OCI-LY7 (cell line): ENCODE measurements at regions of chr16 and their contacts with region 1.

Region 1: DNA sequence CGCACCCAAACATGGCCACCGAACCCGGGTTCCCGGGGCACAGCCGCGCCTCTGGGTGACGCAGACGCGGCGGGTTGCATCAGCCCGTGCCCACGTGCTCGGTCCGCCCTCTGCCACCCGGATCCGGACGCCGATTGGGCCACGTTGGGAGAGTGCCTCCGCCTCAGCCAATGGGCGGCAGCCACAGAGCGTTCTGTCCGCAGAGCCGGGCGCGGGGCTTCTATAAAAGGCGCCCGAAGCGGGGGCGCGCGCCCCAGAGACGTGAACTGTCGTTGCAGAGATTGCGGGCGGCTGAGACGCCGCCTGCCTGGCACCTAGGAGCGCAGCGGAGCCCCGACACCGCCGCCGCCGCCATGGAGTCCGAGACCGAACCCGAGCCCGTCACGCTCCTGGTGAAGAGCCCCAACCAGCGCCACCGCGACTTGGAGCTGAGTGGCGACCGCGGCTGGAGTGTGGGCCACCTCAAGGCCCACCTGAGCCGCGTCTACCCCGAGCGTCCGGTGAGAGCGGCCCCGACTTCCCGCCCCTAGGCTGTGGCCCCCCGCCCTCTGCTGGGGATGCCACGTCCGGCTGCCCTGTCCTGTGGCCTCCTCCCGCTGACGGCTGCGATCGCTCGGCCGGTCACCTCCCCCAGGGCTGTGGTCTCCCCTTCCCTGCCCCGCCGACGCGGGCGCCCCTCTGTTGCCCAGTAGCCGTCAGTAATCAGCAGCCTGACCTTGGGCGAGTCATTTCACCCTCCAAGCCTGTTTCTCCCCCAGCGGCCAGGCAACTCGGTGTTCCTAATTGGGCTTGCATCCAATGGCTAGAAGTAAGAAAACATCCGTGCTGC is at the start of gene HERPUD1:
- DNase-seq: peak; percentile 99
- H3K4me3 ChIP-seq: peak within 1 kb of the TSS; percentile 95
- H3K27ac ChIP-seq: peak within 1 kb of the TSS; percentile 94
- H3K4me1 ChIP-seq: peaks cover 66% of the 10 kb centered on the region
- CTCF ChIP-seq: no peak; the same call in 1 of the 2 replicates
- total RNA-seq, gene HERPUD1: 121 and 140 TPM in 2 replicates

Region 2: GRCh38 chr16:56866943-56867830 is 64.9 kb before region 1 on chr16:
- CTCF ChIA-PET with region 1: interaction called, 6 read pairs
- POLR2A ChIA-PET with region 1: interaction called, 20 read pairs
- intact Hi-C with region 1: loop called (anchors 1 kb)
- DNase-seq: peak; percentile 82
- H3K4me3 ChIP-seq: no peak overlapping the region
- H3K27ac ChIP-seq: no peak overlapping the region
- H3K4me1 ChIP-seq: peaks cover 44% of the 10 kb centered on the region
- CTCF ChIP-seq: peak; percentile 96

Region 3: DNA sequence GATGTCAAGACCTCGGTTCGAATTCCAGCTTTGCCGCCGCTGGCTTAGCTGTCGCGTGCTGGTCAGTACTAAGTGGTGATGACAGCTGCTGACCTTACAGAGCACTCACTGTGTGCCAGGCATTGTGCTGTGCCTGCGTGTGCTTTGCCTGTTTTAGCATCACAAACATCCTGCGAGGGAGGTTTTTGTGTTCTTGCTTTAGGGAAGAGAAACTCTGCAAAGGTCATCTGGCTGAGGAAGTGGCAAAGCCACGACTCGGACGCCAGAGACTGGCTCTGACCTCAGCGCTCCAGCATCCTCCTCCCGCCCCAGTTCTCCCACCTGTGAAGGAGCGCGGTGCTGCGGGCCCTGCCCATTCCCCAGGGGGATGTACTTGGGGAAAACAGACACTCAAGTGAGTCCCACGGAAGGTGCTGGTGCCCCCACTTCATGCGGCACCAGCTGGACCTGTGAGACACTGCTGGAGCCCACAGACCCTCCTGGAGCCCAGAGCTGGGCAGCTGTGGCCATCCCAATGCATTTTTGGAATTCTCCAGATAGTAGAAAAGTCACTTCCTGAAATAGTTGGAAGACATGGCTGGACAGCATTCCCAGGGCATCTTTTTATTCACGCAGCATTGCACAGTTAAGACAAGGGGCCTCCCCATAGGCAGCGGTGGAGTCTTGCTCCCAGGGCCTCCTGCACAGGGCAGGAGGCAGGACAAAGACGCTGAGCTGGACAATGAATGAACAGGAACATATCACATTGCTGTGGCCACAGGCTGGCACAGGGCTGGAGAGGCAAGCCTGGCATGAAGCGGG is 20.1 kb before region 1 on chr16:
- CTCF ChIA-PET with region 1: interaction called, 6 read pairs
- POLR2A ChIA-PET with region 1: interaction called, 256 read pairs
- intact Hi-C with region 1: loop called (anchors 1 kb)
- DNase-seq: peak; percentile 88
- H3K4me3 ChIP-seq: peak overlapping the region; percentile 46
- H3K27ac ChIP-seq: peak overlapping the region; percentile 84
- H3K4me1 ChIP-seq: peaks cover 78% of the 10 kb centered on the region
- CTCF ChIP-seq: no peak

Region 4: GRCh38 chr16:56919099-56919800 is 12.9 kb before region 1 on chr16:
- CTCF ChIA-PET with region 1: interaction called, 14 read pairs
- POLR2A ChIA-PET with region 1: interaction called, 256 read pairs
- intact Hi-C with region 1: loop called (anchors 1 kb)
- DNase-seq: no peak
- H3K4me3 ChIP-seq: no peak overlapping the region
- H3K27ac ChIP-seq: peak overlapping the region; percentile 92
- H3K4me1 ChIP-seq: peaks cover 68% of the 10 kb centered on the region
- CTCF ChIP-seq: no peak

Region 5: DNA sequence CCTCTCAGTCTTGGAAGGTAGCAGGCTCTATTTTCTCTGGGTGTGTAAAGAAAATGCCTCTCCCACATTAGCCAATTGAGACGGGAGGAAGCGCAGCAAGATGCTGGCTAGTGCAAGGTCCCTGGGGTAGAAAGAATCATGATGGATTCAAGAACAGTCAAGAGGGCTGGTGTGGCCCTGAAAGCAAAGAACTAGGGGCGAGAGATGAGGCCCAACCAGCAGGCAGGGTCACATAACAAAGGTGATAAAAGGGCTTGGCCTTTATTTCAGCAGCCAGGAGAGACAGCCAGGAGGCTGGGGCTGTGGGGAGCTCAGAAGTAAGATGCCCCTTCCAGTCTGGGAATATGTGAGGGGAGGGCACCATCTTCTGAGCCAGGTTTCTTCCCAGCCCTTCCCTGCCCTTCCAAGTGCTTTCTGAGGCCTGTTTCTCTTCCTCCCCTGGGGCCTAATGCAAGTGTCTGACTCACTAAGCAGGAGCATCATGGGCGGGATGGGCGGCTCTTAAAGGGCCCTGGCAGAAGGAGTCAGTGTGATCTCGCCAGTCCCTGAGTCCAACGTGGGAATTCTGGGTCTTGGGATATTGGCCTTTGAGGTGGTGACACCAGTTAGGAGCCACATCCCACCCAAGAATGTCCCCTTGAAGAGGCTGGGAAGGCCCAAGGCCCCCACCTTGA is 53.3 kb after region 1 on chr16:
- CTCF ChIA-PET with region 1: no interaction called
- POLR2A ChIA-PET with region 1: no interaction called
- intact Hi-C with region 1: no loop called
- DNase-seq: no peak
- H3K4me3 ChIP-seq: peak overlapping the region; percentile 80
- H3K27ac ChIP-seq: peak overlapping the region; percentile 80
- H3K4me1 ChIP-seq: peaks cover 81% of the 10 kb centered on the region
- CTCF ChIP-seq: no peak

Region 6: DNA sequence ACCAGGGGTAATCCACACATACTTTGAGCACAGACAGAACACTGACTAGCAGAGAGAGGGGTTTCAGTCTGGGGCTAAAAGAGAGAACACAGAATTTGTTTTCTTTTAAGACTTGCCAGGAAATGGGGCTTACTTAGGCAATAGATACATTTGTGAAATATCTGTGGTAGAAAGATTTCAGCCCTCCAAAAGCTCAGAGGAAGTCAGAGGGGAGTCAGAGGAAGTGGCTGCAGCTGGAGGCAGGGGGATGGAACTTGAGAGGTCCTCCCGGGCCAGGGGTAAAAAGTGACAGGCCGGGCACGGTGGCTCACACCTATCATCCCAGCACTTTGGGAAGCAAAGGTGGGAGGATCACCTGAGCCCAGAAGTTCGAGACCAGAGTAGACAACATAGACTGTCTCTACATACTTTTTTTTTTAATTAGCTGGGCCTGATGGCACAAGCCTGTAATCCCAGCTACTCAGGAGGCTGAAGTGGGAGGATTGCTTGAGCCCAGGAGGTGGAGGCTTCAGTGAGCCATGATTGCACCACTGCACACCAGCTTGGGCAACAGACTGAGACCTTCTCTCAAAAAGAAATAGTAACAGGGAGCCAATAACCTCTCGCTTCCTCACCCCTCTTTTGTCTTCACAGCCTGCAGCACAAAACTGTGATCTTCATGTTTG is 107.2 kb after region 1 on chr16:
- CTCF ChIA-PET with region 1: no interaction called
- POLR2A ChIA-PET with region 1: interaction called, 5 read pairs
- intact Hi-C with region 1: loop called (anchors 1 kb)
- DNase-seq: peak; percentile 93
- H3K4me3 ChIP-seq: peak overlapping the region; percentile 69
- H3K27ac ChIP-seq: peak overlapping the region; percentile 98
- H3K4me1 ChIP-seq: peaks cover 87% of the 10 kb centered on the region
- CTCF ChIP-seq: no peak